H1 (cell line): ENCODE measurements at regions of chr2 and their contacts with region 1.

Region 1: GRCh38 chr2:162301151-162301804 is 17.2 kb downstream of the IFIH1 start:
- DNase-seq: no peak
- H3K4me3 ChIP-seq: no peak overlapping the region
- H3K27ac ChIP-seq: no peak overlapping the region
- H3K4me1 ChIP-seq: no peaks in the 10 kb centered on the region
- H3K27me3 ChIP-seq: no peaks in the 10 kb centered on the region
- CTCF ChIP-seq: peak in 2 of 3 experiments; percentile 62 to 72; a peak in 3 of 4 replicates
- EP300 ChIP-seq: no peak
- POLR2A ChIP-seq: no peak
- RAD21 ChIP-seq: peak; percentile 59 to 63

Region 2: GRCh38 chr2:162153608-162154224 is 147.6 kb before region 1 on chr2:
- CTCF ChIA-PET with region 1: interaction called, 117 read pairs
- POLR2A ChIA-PET with region 1: no interaction called
- DNase-seq: peak; percentile 27 to 72
- H3K4me3 ChIP-seq: no peak overlapping the region
- H3K27ac ChIP-seq: no peak overlapping the region
- H3K4me1 ChIP-seq: peaks cover 0 to 3% (median 0%) of the 10 kb centered on the region in 4 experiments; a peak in 1 of 7 replicates
- H3K27me3 ChIP-seq: no peaks in the 10 kb centered on the region
- CTCF ChIP-seq: peak; percentile 11 to 80 (median 74)
- EP300 ChIP-seq: no peak
- POLR2A ChIP-seq: no peak
- RAD21 ChIP-seq: peak; percentile 74 to 81

Region 3: DNA sequence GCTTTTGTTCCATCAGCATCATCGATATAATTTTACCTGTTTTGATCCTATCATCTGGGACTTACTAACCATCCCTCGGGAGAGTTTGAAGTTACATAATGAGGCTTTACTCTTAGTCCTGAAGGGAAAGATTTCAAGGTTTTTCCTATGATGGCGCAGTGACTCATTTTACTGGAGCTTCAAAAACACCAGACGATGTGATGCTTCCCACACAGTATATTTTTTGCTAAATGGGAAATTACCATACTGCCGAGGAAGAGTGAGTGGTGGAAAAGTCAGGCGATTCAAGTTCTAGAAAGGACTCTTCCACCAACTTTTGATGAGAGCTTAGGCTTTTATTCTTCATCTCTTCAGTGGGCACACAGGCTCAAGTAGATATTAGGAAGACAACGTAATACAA is 104.6 kb before region 1 on chr2:
- CTCF ChIA-PET with region 1: interaction called, 12 read pairs
- POLR2A ChIA-PET with region 1: no interaction called
- DNase-seq: no peak
- H3K4me3 ChIP-seq: no peak overlapping the region
- H3K27ac ChIP-seq: no peak overlapping the region
- H3K4me1 ChIP-seq: no peaks in the 10 kb centered on the region
- H3K27me3 ChIP-seq: peaks cover 0 to 1% (median 0%) of the 10 kb centered on the region in 4 experiments; a peak in 1 of 7 replicates
- CTCF ChIP-seq: no peak
- EP300 ChIP-seq: no peak
- POLR2A ChIP-seq: no peak
- RAD21 ChIP-seq: no peak

Region 4: DNA sequence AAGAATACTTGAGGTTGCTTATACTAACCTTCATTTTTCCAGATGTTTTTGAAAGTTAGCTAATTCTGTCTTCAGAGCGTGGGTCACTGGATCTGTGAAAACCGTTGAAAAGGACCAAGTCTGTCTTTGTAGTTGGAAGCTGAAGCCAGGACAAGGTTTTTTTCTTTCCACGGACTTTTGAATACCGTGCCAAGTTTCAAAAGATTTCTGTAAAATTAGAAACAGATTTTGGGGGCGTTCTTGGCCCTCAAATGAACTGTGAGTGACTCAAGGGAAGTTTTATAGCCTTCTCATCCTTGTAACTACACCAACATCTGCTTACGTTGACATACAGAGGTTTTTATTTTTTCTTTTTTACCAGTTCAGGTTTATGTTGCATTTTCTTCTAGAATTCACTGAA is 58.0 kb before region 1 on chr2 and contains the start of gene FAP:
- CTCF ChIA-PET with region 1: interaction called, 11 read pairs
- POLR2A ChIA-PET with region 1: no interaction called
- DNase-seq: no peak
- H3K4me3 ChIP-seq: no peak within 1 kb of the TSS
- H3K27ac ChIP-seq: no peak within 1 kb of the TSS
- H3K4me1 ChIP-seq: no peaks in the 10 kb centered on the region
- H3K27me3 ChIP-seq: no peaks in the 10 kb centered on the region
- CTCF ChIP-seq: no peak
- EP300 ChIP-seq: no peak
- POLR2A ChIP-seq: no peak
- RAD21 ChIP-seq: no peak
- total RNA-seq, gene FAP: not detected in 2 replicates

Region 5: GRCh38 chr2:162318328-162319180 is 17.3 kb after region 1 on chr2 and contains the start of gene IFIH1:
- CTCF ChIA-PET with region 1: interaction called, 30 read pairs
- POLR2A ChIA-PET with region 1: no interaction called
- DNase-seq: peak in 1 of 2 experiments; percentile 71
- H3K4me3 ChIP-seq: peak within 1 kb of the TSS; percentile 50 to 74 (median 64)
- H3K27ac ChIP-seq: peak within 1 kb of the TSS; percentile 19
- H3K4me1 ChIP-seq: peaks cover 0 to 8% (median 2%) of the 10 kb centered on the region in 4 experiments; a peak in 3 of 7 replicates
- H3K27me3 ChIP-seq: peaks cover 0 to 12% (median 6%) of the 10 kb centered on the region in 4 experiments; a peak in 5 of 7 replicates
- CTCF ChIP-seq: peak in 2 of 3 experiments; percentile 9 to 28; a peak in 2 of 4 replicates
- EP300 ChIP-seq: no peak
- POLR2A ChIP-seq: peak in 1 of 2 experiments; percentile 48; a peak in 1 of 3 replicates
- RAD21 ChIP-seq: no peak
- total RNA-seq, gene IFIH1: 1.2 and 2.0 TPM in 2 replicates

Region 6: DNA sequence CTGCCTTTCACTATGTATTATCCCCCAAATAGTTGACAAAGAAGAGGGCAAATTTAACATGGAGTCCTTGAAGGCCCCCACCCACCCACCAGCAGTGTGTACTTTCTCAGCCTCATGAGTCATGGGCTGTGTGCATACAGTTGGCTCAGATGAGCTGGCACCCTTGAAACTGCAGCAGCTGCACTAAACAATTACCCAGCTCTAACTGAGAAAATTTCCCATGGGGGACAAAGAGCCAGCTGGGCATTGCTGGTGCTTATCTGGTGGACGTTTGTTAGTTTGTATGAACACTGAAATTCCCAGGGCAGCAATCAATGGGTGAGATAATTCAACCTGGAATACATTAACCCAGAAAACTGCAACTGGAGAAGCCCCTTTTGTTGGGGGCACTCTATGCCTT is 174.4 kb after region 1 on chr2:
- CTCF ChIA-PET with region 1: no interaction called
- POLR2A ChIA-PET with region 1: no interaction called
- DNase-seq: no peak
- H3K4me3 ChIP-seq: no peak overlapping the region
- H3K27ac ChIP-seq: no peak overlapping the region
- H3K4me1 ChIP-seq: no peaks in the 10 kb centered on the region
- H3K27me3 ChIP-seq: no peaks in the 10 kb centered on the region
- CTCF ChIP-seq: no peak
- EP300 ChIP-seq: no peak
- POLR2A ChIP-seq: no peak
- RAD21 ChIP-seq: no peak